Ovary (tissue), 10 donors: ENCODE measurements at regions of chr7 and their contacts with region 1.

Region 1: DNA sequence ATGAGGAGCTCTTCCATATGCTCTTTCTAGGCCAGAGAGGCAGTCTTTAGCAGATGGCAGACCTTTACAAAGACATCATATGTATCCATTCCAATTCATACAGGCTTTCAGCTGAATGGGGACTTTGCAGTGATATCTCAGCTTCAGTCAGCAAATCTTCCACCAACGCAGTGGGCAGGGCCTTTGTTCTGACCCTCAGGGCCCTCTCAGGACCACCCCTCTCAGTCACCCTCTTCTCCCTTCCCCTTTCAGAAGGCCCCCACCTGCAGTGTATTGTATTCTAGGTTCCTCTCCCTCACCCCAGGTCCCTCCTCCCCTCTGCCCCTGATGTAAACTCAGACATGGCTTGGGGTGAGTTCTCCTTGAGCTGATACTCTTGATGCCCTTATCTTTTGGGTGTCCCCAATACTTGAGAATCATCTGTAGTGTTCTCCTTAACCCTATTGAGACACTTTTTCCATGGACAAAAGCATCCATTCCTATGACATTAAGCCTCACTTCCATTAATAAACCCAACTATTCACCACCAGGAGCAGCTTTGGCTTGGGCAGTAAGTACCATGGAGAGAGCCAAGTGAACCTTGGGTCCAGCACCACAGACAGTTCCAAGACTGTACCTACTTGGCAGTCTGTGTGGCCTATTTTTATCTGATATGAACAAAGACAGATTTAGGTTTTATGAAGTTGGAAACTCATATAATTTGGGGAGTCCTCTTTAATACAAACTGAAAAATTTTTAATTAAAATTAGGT is 62.7 kb downstream of the ADCYAP1R1 start:
- DNase-seq: no peak
- H3K4me3 ChIP-seq: no peak overlapping the region
- H3K27ac ChIP-seq: no peak overlapping the region
- H3K4me1 ChIP-seq: no peaks in the 10 kb centered on the region
- H3K27me3 ChIP-seq: no peaks in the 10 kb centered on the region
- CTCF ChIP-seq: no peak
- EP300 ChIP-seq: no peak
- POLR2A ChIP-seq: no peak

Region 2: GRCh38 chr7:30983042-30983913 is 131.5 kb before region 1 on chr7:
- intact Hi-C with region 1: loop called in 1 of 4 experiments (anchors 10 kb)
- DNase-seq: peak; percentile 76 to 90 (median 87)
- H3K4me3 ChIP-seq: no peak overlapping the region
- H3K27ac ChIP-seq: no peak overlapping the region
- H3K4me1 ChIP-seq: peaks cover under 1% of the 10 kb centered on the region
- H3K27me3 ChIP-seq: no peaks in the 10 kb centered on the region
- CTCF ChIP-seq: peak; percentile 80 to 89 (median 88)
- EP300 ChIP-seq: no peak
- POLR2A ChIP-seq: no peak

Region 3: GRCh38 chr7:31051598-31052486 is 62.9 kb before region 1 on chr7 and contains the start of gene ADCYAP1R1:
- intact Hi-C with region 1: no loop called
- DNase-seq: peak in 2 of 5 donors; percentile 29 to 61
- H3K4me3 ChIP-seq: peak within 1 kb of the TSS; percentile 36
- H3K27ac ChIP-seq: no peak within 1 kb of the TSS
- H3K4me1 ChIP-seq: peaks cover 4% of the 10 kb centered on the region
- H3K27me3 ChIP-seq: no peaks in the 10 kb centered on the region
- CTCF ChIP-seq: no peak
- EP300 ChIP-seq: no peak
- POLR2A ChIP-seq: no peak
- total RNA-seq, gene ADCYAP1R1: 0.33 to 9.2 (median 5.0) TPM